Dendritic cell treated with granulocyte-macrophage colony-stimulating factor and Interleukin-4, amounts not matched to agents 40 ng/mL and 50 ng/mL, for 4 days (primary cell): ENCODE measurements at regions of chr11 and their contacts with region 1.

Region 1: DNA sequence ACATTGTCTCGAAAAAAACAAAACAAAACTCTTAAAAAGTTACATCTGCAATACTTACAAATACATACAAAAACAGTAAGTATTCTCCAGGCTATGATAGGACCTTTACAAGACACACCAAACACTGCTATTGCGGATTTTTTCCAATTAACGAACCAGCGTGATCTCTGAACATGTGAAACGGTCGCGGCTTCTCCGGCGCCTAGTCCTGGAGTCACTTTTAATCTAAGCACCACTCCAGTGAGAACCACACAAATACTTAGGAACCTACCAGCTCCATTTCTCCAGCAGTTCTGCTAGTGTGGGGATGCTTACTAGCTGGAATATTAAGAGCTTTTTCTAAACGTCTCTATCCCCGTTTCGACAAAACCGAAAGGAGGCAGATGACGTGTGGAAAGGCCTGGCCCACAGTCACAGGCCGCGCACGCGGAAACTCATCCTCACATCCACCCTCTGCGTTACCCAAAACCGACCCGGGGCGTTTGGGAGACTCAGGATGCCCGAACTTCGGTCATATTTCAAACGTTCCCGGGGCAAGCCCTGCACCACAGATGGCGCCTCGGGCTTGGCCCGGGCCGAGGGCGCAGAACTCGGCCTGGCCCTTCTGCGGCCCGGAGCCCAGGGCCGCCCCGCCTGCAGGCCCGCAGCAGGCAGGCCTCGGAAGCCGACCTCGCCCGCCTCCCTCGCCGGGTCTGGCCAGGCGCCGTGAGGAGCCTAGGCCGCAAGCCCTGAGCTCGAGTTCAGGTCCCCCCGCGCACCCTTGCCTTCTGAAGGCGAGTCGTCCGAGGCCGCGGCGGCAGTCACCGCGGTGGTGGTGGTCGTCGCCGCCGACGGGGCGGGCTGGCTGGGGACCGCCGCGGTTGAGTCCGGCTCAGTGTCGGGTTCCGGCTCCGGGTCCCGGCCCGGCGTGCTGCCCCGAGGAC is 575 bp downstream of the FNBP4 start:
- H3K4me3 Mint-ChIP-seq: peak overlapping the region; percentile 94
- H3K27ac Mint-ChIP-seq: peak overlapping the region; percentile 99
- H3K4me1 Mint-ChIP-seq: peaks cover 23% of the 10 kb centered on the region
- H3K27me3 Mint-ChIP-seq: no peaks in the 10 kb centered on the region

Region 2: GRCh38 chr11:47642099-47642855 is 124.3 kb before region 1 on chr11 and contains the start of gene MTCH2:
- intact Hi-C with region 1: loop called (anchors 1 kb)
- H3K4me3 Mint-ChIP-seq: peak within 1 kb of the TSS; percentile 97
- H3K27ac Mint-ChIP-seq: peak within 1 kb of the TSS; percentile 97
- H3K4me1 Mint-ChIP-seq: peaks cover 14% of the 10 kb centered on the region
- H3K27me3 Mint-ChIP-seq: no peaks in the 10 kb centered on the region

Region 3: DNA sequence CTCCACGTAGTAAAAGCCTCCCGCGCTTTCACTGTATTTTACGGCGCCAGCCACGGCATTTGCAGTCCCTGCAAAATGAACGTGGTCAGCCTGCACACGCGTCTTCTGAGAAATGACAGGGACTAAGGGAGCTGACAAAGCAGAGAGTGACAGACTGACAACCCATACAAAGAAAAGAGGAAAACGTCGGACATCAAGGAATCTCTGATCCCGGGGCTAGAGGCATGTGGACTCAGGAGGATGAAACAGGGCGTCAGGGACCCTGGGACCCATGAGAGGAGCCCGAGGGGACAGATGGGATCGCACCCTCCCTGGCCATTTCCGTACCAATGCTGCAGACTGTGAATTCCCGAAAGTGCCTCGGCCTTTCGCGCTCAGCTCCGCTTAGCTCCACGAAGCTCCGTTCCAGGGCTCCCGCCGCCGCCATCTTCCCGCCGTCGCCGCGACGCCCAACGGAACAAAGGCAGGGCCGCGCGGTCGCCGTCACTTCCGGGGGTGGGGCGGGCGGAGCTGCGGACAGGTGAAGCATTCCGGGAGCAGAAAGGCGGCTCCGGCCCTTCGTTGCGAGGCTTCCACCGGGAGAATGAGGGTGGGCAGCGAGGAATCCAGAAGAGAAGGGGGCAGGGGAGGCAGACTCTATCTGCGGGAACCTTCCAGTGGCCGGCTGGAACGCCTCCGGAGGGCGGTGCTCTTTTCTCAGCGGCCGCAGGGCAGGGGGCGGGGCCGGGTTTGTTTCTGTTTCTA is 81.5 kb after region 1 on chr11 and contains the start of gene NUP160:
- intact Hi-C with region 1: loop called (anchors 5 kb)
- H3K4me3 Mint-ChIP-seq: peak within 1 kb of the TSS; percentile 95
- H3K27ac Mint-ChIP-seq: peak within 1 kb of the TSS; percentile 95
- H3K4me1 Mint-ChIP-seq: peaks cover 48% of the 10 kb centered on the region
- H3K27me3 Mint-ChIP-seq: no peaks in the 10 kb centered on the region